ENCODE measurements at regions of chr6 and their contacts with region 1.

Region 1: GRCh38 chr6:7276199-7276524 is 36.8 kb downstream of the SSR1 start:
- DNase-seq: no peak
- H3K4me3 ChIP-seq: no peak overlapping the region
- H3K4me3 Mint-ChIP-seq: no peak overlapping the region
- H3K27ac ChIP-seq: no peak overlapping the region
- H3K27ac Mint-ChIP-seq: peak overlapping the region in 1 of 7 donors; percentile 5
- H3K4me1 ChIP-seq: no peaks in the 10 kb centered on the region
- H3K4me1 Mint-ChIP-seq: peaks cover 0 to 10% (median 8%) of the 10 kb centered on the region in 4 donors
- H3K27me3 ChIP-seq: no peaks in the 10 kb centered on the region
- H3K27me3 Mint-ChIP-seq: no peaks in the 10 kb centered on the region

Region 2: GRCh38 chr6:7389451-7390225 is 113.5 kb after region 1 on chr6 and contains the starts of genes CAGE1 and RIOK1:
- CTCF ChIA-PET with region 1: interaction called, 27 read pairs
- POLR2A ChIA-PET with region 1: no interaction called
- intact Hi-C with region 1: no loop called
- DNase-seq: peak; percentile 94 to 96 (median 96)
- H3K4me3 ChIP-seq: peak within 1 kb of the TSS; percentile 91 to 99
- H3K4me3 Mint-ChIP-seq: peak within 1 kb of the TSS; percentile 92 to 97 (median 94)
- H3K27ac ChIP-seq: peak within 1 kb of the TSS; percentile 94
- H3K27ac Mint-ChIP-seq: peak within 1 kb of the TSS; percentile 97 to 100 (median 100)
- H3K4me1 ChIP-seq: peaks cover 30% of the 10 kb centered on the region
- H3K4me1 Mint-ChIP-seq: peaks cover 32 to 51% (median 42%) of the 10 kb centered on the region in 4 donors
- H3K27me3 ChIP-seq: no peaks in the 10 kb centered on the region
- H3K27me3 Mint-ChIP-seq: no peaks in the 10 kb centered on the region
- total RNA-seq, gene CAGE1: 0.17 to 0.33 TPM
- total RNA-seq, gene RIOK1: 22.4 to 26.1 TPM

Region 3: DNA sequence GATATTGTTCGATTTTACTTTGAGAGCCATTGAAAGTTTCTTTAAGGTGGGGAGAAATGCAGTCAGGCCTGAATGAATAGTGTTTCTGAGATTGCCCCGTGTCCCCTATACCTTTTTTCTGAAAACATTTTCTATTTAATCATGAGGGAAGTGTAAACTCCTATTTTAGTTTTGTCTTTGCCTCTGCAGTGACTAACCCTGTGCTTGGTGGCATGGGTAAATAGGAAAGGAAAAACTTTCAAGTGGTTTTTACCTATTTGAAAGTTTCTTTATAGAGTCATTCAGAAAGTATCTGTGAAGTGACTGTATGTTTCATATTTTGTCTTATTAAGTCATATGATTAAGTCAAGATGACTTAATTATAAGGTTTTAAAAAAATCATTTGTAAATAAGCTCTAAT is 328.3 kb after region 1 on chr6:
- CTCF ChIA-PET with region 1: interaction called, 225 read pairs
- POLR2A ChIA-PET with region 1: no interaction called
- intact Hi-C with region 1: no loop called
- DNase-seq: no peak
- H3K4me3 ChIP-seq: no peak overlapping the region
- H3K4me3 Mint-ChIP-seq: no peak overlapping the region
- H3K27ac ChIP-seq: no peak overlapping the region
- H3K27ac Mint-ChIP-seq: peak overlapping the region in 3 of 7 donors; percentile 4 to 46 (median 11)
- H3K4me1 ChIP-seq: no peaks in the 10 kb centered on the region
- H3K4me1 Mint-ChIP-seq: no peaks in the 10 kb centered on the region
- H3K27me3 ChIP-seq: no peaks in the 10 kb centered on the region
- H3K27me3 Mint-ChIP-seq: no peaks in the 10 kb centered on the region

Region 4: GRCh38 chr6:8006208-8006607 is 730.0 kb after region 1 on chr6:
- CTCF ChIA-PET with region 1: interaction called, 8 read pairs
- POLR2A ChIA-PET with region 1: no interaction called
- intact Hi-C with region 1: loop called (anchors 2 kb)
- DNase-seq: peak in 1 of 5 donors; percentile 5
- H3K4me3 ChIP-seq: no peak overlapping the region
- H3K4me3 Mint-ChIP-seq: no peak overlapping the region
- H3K27ac ChIP-seq: no peak overlapping the region
- H3K27ac Mint-ChIP-seq: no peak overlapping the region
- H3K4me1 ChIP-seq: no peaks in the 10 kb centered on the region
- H3K4me1 Mint-ChIP-seq: no peaks in the 10 kb centered on the region
- H3K27me3 ChIP-seq: no peaks in the 10 kb centered on the region
- H3K27me3 Mint-ChIP-seq: no peaks in the 10 kb centered on the region